BJ (cell line): ENCODE measurements at regions of chrX and their contacts with region 1.

Region 1: DNA sequence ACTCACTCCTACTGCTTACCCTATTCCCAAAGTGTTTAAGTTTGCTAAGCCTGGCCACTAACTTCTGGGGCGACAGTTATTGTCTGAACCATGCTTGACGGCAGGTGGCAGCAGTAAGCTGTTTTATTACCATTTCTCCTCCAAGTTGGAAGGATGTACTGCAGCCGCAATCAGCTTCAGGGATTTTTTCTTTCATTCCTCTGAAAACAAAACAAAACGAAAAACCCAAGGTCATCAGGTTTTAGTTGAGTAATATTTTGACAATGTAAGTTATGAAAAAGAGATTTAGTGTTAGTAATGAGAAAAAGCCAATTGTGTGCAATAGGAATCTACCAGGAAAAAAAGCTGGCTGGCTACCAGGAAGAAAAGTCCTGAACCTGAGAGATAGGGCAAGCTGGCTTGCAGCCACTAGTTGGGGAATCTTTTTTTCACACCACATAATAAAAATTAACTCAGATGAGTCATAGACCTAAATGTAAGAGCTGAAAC is 13.2 kb upstream of the RAB9B start:
- DNase-seq: peak; percentile 56
- H3K4me3 ChIP-seq: no peak overlapping the region
- H3K27me3 ChIP-seq: no peaks in the 10 kb centered on the region
- CTCF ChIP-seq: peak; percentile 62

Region 2: DNA sequence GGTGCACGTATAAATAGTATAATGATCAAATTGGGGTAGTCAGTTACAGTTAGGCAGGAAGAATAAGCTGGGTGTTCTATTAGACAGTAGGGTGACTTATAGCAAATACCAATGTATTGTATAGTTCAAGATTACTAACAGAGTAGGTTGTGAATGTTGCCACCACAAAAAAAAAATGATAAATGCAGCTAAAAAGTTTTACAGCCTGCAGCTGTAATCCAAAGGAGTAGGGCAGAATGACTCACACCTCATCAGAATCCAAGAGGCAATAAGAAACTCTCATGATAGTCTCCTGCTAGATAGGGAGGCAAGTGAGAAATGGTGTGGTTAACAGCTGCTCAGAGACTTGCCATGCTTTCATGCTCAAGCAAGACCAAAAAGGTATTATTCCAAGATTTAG is 279.5 kb before region 1 on chrX:
- CTCF ChIA-PET with region 1: no interaction called
- POLR2A ChIA-PET with region 1: no interaction called
- DNase-seq: peak; percentile 32
- H3K4me3 ChIP-seq: no peak overlapping the region
- H3K27me3 ChIP-seq: no peaks in the 10 kb centered on the region
- CTCF ChIP-seq: no peak

Region 3: GRCh38 chrX:103686199-103687072 is 158.8 kb before region 1 on chrX and contains the start of gene MORF4L2:
- CTCF ChIA-PET with region 1: no interaction called
- POLR2A ChIA-PET with region 1: interaction called, 13 read pairs
- DNase-seq: peak; percentile 98
- H3K4me3 ChIP-seq: peak within 1 kb of the TSS; percentile 71
- H3K27me3 ChIP-seq: no peaks in the 10 kb centered on the region
- CTCF ChIP-seq: no peak
- polyA plus RNA-seq, gene MORF4L2: 479 and 701 TPM in 2 replicates

Region 4: GRCh38 chrX:103831803-103832544 is 13.2 kb before region 1 on chrX and contains the start of gene RAB9B:
- CTCF ChIA-PET with region 1: interaction called, 19 read pairs
- POLR2A ChIA-PET with region 1: no interaction called
- DNase-seq: no peak
- H3K4me3 ChIP-seq: peak within 1 kb of the TSS; percentile 48
- H3K27me3 ChIP-seq: no peaks in the 10 kb centered on the region
- CTCF ChIP-seq: no peak
- polyA plus RNA-seq, gene RAB9B: 0.39 and 0.82 TPM in 2 replicates

Region 5: GRCh38 chrX:103941201-103941975 is 96.2 kb after region 1 on chrX:
- CTCF ChIA-PET with region 1: interaction called, 15 read pairs
- POLR2A ChIA-PET with region 1: no interaction called
- DNase-seq: no peak
- H3K4me3 ChIP-seq: no peak overlapping the region
- H3K27me3 ChIP-seq: no peaks in the 10 kb centered on the region
- CTCF ChIP-seq: peak; percentile 37; the same call in 1 of the 2 replicates

Region 6: DNA sequence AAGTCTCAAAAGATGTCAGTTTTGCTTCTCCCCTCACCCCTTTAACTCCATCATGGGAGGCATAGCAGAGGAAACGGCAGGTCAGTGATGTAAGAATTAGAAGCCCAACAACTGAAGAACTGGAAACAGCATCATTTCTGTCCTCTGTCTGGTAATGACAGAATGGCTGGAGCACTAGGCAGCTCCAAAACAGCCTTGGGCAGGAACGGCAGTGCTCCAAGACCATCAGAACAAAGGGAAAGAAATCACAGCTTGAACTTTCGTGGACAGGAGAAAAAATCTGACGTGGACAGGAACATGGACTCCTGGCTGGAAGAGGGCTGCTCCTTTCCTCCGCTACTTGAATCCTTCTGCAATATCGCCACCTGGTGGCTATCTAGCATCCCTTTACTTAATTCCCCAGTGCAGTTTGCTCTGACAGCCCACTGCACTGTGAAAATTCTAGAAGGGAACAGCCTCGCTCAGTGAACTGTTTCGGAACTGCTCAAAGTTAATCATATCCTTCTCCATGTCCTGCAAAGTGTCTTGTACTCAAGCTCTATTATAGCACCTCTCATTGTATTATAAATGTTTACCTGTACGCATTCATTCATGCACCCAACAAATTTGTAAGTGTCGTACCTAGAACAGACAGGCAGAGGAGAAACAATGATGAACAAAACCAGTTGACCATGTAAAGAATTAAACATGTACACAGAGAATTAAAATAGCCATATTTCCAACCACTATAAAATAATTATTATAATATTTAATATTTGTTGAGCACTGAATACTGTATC is 291.2 kb after region 1 on chrX:
- CTCF ChIA-PET with region 1: interaction called, 14 read pairs
- POLR2A ChIA-PET with region 1: no interaction called
- DNase-seq: no peak
- H3K4me3 ChIP-seq: peak overlapping the region; percentile 49
- H3K27me3 ChIP-seq: no peaks in the 10 kb centered on the region
- CTCF ChIP-seq: peak; percentile 63